PC-3 (cell line): ENCODE measurements at regions of chr22 and their contacts with region 1.

Region 1: GRCh38 chr22:31148953-31149627 is 8.8 kb upstream of the PLA2G3 start:
- DNase-seq: peak; percentile 70
- ATAC-seq: peak; percentile 95
- H3K4me3 ChIP-seq: no peak overlapping the region
- H3K27ac ChIP-seq: no peak overlapping the region
- H3K4me1 ChIP-seq: no peaks in the 10 kb centered on the region
- H3K27me3 ChIP-seq: no peaks in the 10 kb centered on the region
- CTCF ChIP-seq: peak; percentile 83

Region 2: DNA sequence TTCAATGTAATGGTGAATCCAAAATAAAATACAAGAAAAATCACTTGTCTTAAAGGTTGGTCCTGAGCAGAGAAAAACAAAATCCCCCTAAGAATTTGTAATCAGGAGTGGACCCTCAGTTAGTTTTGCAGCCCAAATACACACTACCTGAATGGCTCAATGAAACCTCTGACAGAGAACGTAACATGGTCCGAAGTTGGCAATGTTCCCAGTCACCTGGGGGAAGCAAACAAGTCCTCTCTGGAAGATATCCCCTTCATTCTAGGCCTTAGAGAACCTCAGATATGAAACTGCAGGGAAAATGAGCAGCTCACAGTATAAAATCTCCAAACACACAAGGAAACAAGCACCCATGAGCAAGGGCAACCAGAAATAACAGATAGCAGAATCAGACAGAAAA is 238.7 kb before region 1 on chr22:
- CTCF ChIA-PET with region 1: no interaction called
- POLR2A ChIA-PET with region 1: interaction called, 22 read pairs
- intact Hi-C with region 1: no loop called
- DNase-seq: no peak
- ATAC-seq: no peak
- H3K4me3 ChIP-seq: no peak overlapping the region
- H3K27ac ChIP-seq: no peak overlapping the region
- H3K4me1 ChIP-seq: no peaks in the 10 kb centered on the region
- H3K27me3 ChIP-seq: no peaks in the 10 kb centered on the region
- CTCF ChIP-seq: no peak

Region 3: GRCh38 chr22:30947816-30948454 is 201.2 kb before region 1 on chr22:
- CTCF ChIA-PET with region 1: no interaction called
- POLR2A ChIA-PET with region 1: no interaction called
- intact Hi-C with region 1: loop called (anchors 1 kb)
- DNase-seq: peak; percentile 47
- ATAC-seq: no peak
- H3K4me3 ChIP-seq: no peak overlapping the region
- H3K27ac ChIP-seq: no peak overlapping the region
- H3K4me1 ChIP-seq: no peaks in the 10 kb centered on the region
- H3K27me3 ChIP-seq: no peaks in the 10 kb centered on the region
- CTCF ChIP-seq: peak; percentile 69

Region 4: GRCh38 chr22:31107178-31107893 is 41.8 kb before region 1 on chr22 and contains the start of gene SELENOM:
- CTCF ChIA-PET with region 1: interaction called, 16 read pairs
- POLR2A ChIA-PET with region 1: no interaction called
- intact Hi-C with region 1: loop called (anchors 1 kb)
- DNase-seq: peak; percentile 97
- ATAC-seq: peak; percentile 98
- H3K4me3 ChIP-seq: peak within 1 kb of the TSS; percentile 74
- H3K27ac ChIP-seq: no peak within 1 kb of the TSS
- H3K4me1 ChIP-seq: peaks cover 4% of the 10 kb centered on the region; the same call in 1 of the 2 replicates
- H3K27me3 ChIP-seq: no peaks in the 10 kb centered on the region
- CTCF ChIP-seq: peak; percentile 88
- total RNA-seq, gene SELENOM: 36.8 and 56.7 TPM in 2 replicates

Region 5: DNA sequence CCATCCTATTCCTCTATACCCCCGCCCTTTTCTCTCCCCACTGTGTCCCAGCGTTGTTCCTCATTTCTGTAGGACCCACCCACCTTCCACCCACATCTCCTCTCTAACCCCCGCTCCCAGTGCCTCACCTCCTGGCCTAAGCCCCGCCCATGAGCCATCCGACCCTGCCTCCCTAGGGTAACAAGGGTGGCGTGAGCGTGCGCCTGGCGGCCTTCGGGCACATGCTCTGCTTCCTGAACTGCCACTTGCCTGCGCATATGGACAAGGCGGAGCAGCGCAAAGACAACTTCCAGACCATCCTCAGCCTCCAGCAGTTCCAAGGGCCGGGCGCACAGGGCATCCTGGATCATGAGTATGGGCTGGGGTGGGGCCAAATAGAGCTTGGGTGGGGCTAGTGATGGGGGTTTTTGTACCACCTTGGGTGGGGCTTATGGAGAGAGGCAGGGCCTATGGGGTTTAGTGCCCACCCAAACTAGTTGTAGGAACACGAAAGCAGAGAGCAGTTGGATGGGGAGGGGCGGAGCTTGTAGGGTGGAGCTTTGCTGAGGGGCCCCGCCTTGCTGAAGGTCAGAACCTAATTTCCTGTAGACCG is 21.8 kb before region 1 on chr22:
- CTCF ChIA-PET with region 1: no interaction called
- POLR2A ChIA-PET with region 1: no interaction called
- intact Hi-C with region 1: no loop called
- DNase-seq: no peak
- ATAC-seq: no peak
- H3K4me3 ChIP-seq: no peak overlapping the region
- H3K27ac ChIP-seq: no peak overlapping the region
- H3K4me1 ChIP-seq: peaks cover 12% of the 10 kb centered on the region; the same call in 1 of the 2 replicates
- H3K27me3 ChIP-seq: no peaks in the 10 kb centered on the region
- CTCF ChIP-seq: no peak